Naive thymus-derived CD4-positive, alpha-beta T cell (primary cell): ENCODE measurements at regions of chr12 and their contacts with region 1.

Region 1: GRCh38 chr12:64759035-64759901 is at the start of gene GNS:
- DNase-seq: peak; percentile 81 to 99 (median 86)
- ATAC-seq: peak; percentile 96
- H3K4me3 ChIP-seq: peak within 1 kb of the TSS; percentile 98
- H3K4me3 Mint-ChIP-seq: peak within 1 kb of the TSS; percentile 86 to 99 (median 96)
- H3K27ac ChIP-seq: peak within 1 kb of the TSS; percentile 77
- H3K27ac Mint-ChIP-seq: peak within 1 kb of the TSS; percentile 78 to 96 (median 91)
- H3K4me1 ChIP-seq: peaks cover 0 to 21% of the 10 kb centered on the region in 2 donors
- H3K4me1 Mint-ChIP-seq: peaks cover 17 to 60% (median 48%) of the 10 kb centered on the region in 7 donors
- H3K27me3 ChIP-seq: no peaks in the 10 kb centered on the region
- H3K27me3 Mint-ChIP-seq: peaks cover 0 to 4% (median 0%) of the 10 kb centered on the region in 5 donors
- total RNA-seq, gene GNS: 24.4 to 62.8 (median 35.2) TPM

Region 2: DNA sequence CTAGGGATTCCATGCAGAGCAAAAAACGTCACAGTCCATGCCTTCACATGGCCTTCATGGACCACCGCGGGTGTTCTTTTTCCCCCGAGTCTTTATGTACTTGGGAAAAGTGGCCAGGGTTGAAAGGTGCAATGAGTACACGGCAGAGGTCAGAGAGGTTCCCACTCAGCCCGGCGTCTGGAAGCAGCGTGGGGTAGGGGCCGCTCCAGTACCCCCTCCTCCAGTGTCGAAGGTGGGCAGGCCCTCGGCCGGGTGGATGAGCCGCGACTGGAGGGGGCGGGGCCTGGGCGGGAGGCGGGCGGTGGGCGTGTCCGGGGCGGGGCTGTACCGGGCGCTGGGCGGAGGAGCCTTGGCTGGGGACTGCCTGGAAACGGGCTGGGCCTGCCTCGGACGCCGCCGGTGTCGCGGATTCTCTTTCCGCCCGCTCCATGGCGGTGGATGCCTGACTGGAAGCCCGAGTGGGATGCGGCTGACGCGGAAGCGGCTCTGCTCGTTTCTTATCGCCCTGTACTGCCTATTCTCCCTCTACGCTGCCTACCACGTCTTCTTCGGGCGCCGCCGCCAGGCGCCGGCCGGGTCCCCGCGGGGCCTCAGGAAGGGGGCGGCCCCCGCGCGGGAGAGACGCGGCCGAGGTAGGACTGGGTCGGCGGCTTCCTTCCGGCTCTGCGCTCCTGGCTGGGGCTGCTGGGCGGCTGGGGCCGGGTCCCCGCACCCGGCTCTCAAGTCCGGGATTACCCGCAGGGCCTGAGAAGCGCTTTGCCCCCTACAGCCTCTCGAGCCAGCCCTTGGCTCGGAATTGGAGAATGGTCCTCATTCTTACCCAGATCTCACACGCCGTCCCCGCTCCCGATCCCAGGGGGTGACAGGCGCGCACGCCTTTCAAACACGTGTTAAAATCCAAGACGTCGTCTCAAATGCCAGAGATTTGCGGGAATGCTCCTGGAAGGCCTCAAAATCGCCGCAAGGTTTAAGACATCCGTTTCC is 979.5 kb before region 1 on chr12 and contains the start of gene RXYLT1:
- CTCF ChIA-PET with region 1: no interaction called
- POLR2A ChIA-PET with region 1: no interaction called
- intact Hi-C with region 1: loop called in 1 of 2 experiments (anchors 2 kb)
- DNase-seq: peak; percentile 68 to 85 (median 77)
- ATAC-seq: peak; percentile 98
- H3K4me3 ChIP-seq: peak within 1 kb of the TSS; percentile 72
- H3K4me3 Mint-ChIP-seq: peak within 1 kb of the TSS; percentile 91 to 99 (median 96)
- H3K27ac ChIP-seq: peak within 1 kb of the TSS; percentile 88
- H3K27ac Mint-ChIP-seq: peak within 1 kb of the TSS; percentile 89 to 98 (median 94)
- H3K4me1 ChIP-seq: peaks cover 3 to 13% of the 10 kb centered on the region in 2 donors
- H3K4me1 Mint-ChIP-seq: peaks cover 6 to 48% (median 25%) of the 10 kb centered on the region in 7 donors
- H3K27me3 ChIP-seq: no peaks in the 10 kb centered on the region
- H3K27me3 Mint-ChIP-seq: peaks cover 0 to 3% (median 0%) of the 10 kb centered on the region in 5 donors
- total RNA-seq, gene RXYLT1: 9.9 to 22.0 (median 15.4) TPM

Region 3: GRCh38 chr12:64403707-64404469 is 355.4 kb before region 1 on chr12 and contains the start of gene XPOT:
- CTCF ChIA-PET with region 1: no interaction called
- POLR2A ChIA-PET with region 1: no interaction called
- intact Hi-C with region 1: loop called in 1 of 2 experiments (anchors 1 kb)
- DNase-seq: peak; percentile 85 to 94 (median 92)
- ATAC-seq: peak; percentile 97
- H3K4me3 ChIP-seq: peak within 1 kb of the TSS; percentile 81
- H3K4me3 Mint-ChIP-seq: peak within 1 kb of the TSS; percentile 90 to 99 (median 96)
- H3K27ac ChIP-seq: peak within 1 kb of the TSS; percentile 82
- H3K27ac Mint-ChIP-seq: peak within 1 kb of the TSS; percentile 84 to 98 (median 95)
- H3K4me1 ChIP-seq: peaks cover 0 to 8% of the 10 kb centered on the region in 2 donors
- H3K4me1 Mint-ChIP-seq: peaks cover 8 to 41% (median 25%) of the 10 kb centered on the region in 7 donors
- H3K27me3 ChIP-seq: no peaks in the 10 kb centered on the region
- H3K27me3 Mint-ChIP-seq: no peaks in the 10 kb centered on the region
- total RNA-seq, gene XPOT: 46.6 to 118 (median 75.1) TPM

Region 4: DNA sequence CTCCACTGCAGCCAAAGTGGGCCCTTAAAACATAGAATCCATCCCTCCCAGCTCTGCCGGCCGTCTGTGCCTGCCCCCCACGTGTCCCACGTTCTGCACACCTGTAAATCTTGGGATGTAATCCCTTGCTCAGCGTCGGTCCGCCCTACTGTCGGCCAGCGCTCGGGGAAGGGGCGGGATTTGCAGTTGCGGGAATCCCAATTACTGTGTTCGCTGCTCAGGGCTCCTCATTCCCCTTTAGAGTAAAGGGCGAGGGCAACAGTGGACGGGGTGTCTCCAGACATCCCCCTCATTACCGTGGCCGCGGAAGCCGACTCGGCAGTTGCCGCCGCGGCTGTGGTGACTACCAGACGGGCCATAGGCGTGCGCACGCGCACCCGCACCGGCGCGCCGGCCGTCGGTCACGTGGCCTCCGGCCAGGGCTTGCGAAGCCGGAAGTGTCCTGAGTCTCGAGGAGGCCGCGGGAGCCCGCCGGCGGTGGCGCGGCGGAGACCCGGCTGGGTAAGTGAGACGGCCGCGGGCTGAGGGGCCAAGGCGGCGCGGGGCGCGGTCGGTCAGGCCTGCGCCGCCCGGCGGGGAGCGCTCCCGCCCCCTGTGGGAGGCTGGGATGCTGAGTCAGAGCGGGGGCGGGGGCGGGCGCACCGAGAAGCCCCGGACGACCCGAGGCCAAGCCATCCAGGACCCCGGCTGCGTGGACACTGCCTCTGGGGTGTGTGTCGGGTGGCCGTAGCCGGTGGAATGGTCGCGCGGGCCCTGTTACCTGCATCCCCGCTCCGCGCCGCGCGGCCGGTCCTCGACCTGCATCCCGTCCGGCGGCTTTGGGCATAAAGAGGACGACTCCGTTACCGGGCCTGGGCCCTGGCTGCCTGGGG is 307.3 kb before region 1 on chr12 and contains the start of gene TBK1:
- CTCF ChIA-PET with region 1: no interaction called
- POLR2A ChIA-PET with region 1: no interaction called
- intact Hi-C with region 1: loop called (anchors 2 kb)
- DNase-seq: peak in 8 of 9 donors; percentile 21 to 80 (median 34)
- ATAC-seq: peak; percentile 78
- H3K4me3 ChIP-seq: peak within 1 kb of the TSS; percentile 61
- H3K4me3 Mint-ChIP-seq: peak within 1 kb of the TSS; percentile 90 to 99 (median 94)
- H3K27ac ChIP-seq: peak within 1 kb of the TSS; percentile 74
- H3K27ac Mint-ChIP-seq: peak within 1 kb of the TSS; percentile 86 to 95 (median 94)
- H3K4me1 ChIP-seq: peaks cover 19 to 24% of the 10 kb centered on the region in 2 donors
- H3K4me1 Mint-ChIP-seq: peaks cover 20 to 54% (median 41%) of the 10 kb centered on the region in 7 donors
- H3K27me3 ChIP-seq: no peaks in the 10 kb centered on the region
- H3K27me3 Mint-ChIP-seq: no peaks in the 10 kb centered on the region
- total RNA-seq, gene TBK1: 9.0 to 34.0 (median 12.1) TPM

Region 5: DNA sequence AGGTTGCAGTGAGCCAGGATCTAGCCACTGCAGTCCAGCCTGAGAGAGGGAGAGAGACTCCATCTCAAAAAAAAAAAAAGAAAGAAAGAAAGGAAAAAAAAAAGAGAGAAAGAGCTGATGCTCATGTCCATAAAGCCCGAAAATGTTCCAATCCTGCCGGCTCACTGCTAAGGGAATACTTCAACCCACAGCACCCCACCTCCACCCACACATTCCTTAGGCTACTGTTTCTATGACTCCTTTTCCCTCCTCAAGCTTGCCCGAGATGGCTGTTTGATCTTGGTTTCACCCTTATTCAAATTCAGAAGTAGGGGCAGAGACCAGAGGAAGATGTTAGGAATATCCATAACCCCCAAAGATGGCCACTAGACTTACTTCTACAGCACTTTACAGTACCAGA is 208.5 kb before region 1 on chr12:
- CTCF ChIA-PET with region 1: no interaction called
- POLR2A ChIA-PET with region 1: no interaction called
- intact Hi-C with region 1: loop called in 1 of 2 experiments (anchors 1 kb)
- DNase-seq: no peak
- ATAC-seq: no peak
- H3K4me3 ChIP-seq: no peak overlapping the region
- H3K4me3 Mint-ChIP-seq: no peak overlapping the region
- H3K27ac ChIP-seq: no peak overlapping the region
- H3K27ac Mint-ChIP-seq: peak overlapping the region in 3 of 9 donors; percentile 7 to 83 (median 18)
- H3K4me1 ChIP-seq: peaks cover 0 to 4% of the 10 kb centered on the region in 2 donors
- H3K4me1 Mint-ChIP-seq: peaks cover 2 to 11% (median 9%) of the 10 kb centered on the region in 7 donors
- H3K27me3 ChIP-seq: no peaks in the 10 kb centered on the region
- H3K27me3 Mint-ChIP-seq: peaks cover 0 to 20% (median 0%) of the 10 kb centered on the region in 5 donors

Region 6: DNA sequence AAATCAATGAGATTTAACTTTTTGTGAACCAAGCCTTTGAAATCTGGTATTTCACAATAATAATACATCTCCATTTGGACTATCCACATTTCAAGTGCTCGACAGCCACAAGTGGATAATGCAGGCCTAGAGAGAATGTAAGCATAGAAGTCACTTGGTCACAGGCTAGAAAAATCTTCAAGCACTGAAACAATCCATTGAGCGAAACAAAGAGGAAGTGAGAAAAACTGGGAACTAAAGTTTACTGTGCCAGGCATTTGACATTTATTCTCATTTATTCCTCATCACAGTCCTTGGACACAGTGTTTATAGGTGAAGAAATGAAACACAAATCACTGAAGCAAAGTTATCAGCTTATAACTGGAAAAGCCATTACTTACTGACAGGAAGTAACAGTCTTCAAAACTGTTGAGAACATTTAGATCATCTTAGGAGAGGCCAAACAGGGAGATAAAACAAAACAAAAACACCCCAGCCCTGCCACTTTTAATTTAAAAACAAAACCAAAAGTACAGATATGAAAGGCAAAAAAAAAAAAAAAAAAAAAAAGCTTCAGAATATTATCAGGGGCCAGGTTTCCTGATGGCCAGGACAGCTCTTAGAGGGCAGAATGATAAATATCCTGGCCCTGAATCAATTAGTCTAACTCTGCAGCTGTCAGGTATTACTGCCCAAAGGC is 29.2 kb before region 1 on chr12:
- CTCF ChIA-PET with region 1: no interaction called
- POLR2A ChIA-PET with region 1: no interaction called
- intact Hi-C with region 1: loop called in 1 of 2 experiments (anchors 1 kb)
- DNase-seq: peak in 1 of 9 donors; percentile 4
- ATAC-seq: peak; percentile 42
- H3K4me3 ChIP-seq: no peak overlapping the region
- H3K4me3 Mint-ChIP-seq: peak overlapping the region in 5 of 10 donors; percentile 12 to 63 (median 41)
- H3K27ac ChIP-seq: no peak overlapping the region
- H3K27ac Mint-ChIP-seq: peak overlapping the region; percentile 38 to 88 (median 71)
- H3K4me1 ChIP-seq: peaks cover 7 to 20% of the 10 kb centered on the region in 2 donors
- H3K4me1 Mint-ChIP-seq: peaks cover 11 to 24% (median 16%) of the 10 kb centered on the region in 7 donors
- H3K27me3 ChIP-seq: no peaks in the 10 kb centered on the region
- H3K27me3 Mint-ChIP-seq: no peaks in the 10 kb centered on the region

Region 7: DNA sequence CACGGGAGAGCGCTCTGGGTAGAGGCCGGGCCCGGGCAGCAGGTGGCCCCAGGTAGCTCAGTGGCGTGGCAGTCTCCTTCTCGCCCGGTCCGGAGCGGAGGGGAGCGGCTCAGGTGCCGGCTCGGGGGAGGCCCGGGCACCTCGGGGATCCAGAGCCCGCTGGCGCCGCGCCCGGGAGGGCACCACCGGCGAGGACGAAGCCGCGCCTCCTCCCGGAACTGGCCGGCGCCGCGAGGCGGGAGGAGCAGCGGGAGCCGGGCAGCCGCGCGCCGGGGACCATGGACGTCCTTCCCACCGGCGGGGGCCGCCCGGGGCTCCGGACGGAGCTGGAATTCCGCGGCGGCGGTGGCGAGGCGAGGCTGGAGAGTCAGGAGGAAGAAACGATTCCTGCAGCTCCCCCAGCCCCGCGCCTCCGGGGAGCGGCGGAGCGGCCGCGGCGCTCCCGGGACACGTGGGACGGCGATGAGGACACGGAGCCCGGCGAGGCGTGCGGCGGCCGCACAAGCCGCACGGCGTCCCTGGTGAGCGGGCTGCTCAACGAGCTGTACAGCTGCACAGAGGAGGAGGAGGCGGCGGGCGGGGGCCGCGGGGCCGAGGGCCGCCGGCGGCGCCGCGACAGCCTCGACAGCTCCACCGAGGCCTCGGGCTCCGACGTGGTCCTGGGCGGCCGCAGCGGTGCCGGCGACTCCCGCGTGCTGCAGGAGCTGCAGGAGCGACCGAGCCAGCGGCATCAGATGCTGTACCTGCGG is 21.4 kb after region 1 on chr12:
- CTCF ChIA-PET with region 1: no interaction called
- POLR2A ChIA-PET with region 1: no interaction called
- intact Hi-C with region 1: loop called in 1 of 2 experiments (anchors 1 kb)
- DNase-seq: peak in 2 of 9 donors; percentile 20 to 37
- ATAC-seq: peak; percentile 69
- H3K4me3 ChIP-seq: peak overlapping the region; percentile 25
- H3K4me3 Mint-ChIP-seq: peak overlapping the region; percentile 63 to 90 (median 82)
- H3K27ac ChIP-seq: no peak overlapping the region
- H3K27ac Mint-ChIP-seq: no peak overlapping the region
- H3K4me1 ChIP-seq: peaks cover 6 to 14% of the 10 kb centered on the region in 2 donors
- H3K4me1 Mint-ChIP-seq: peaks cover 15 to 21% (median 18%) of the 10 kb centered on the region in 7 donors
- H3K27me3 ChIP-seq: peaks cover 24 to 31% of the 10 kb centered on the region in 2 donors
- H3K27me3 Mint-ChIP-seq: peaks cover 76 to 87% (median 82%) of the 10 kb centered on the region in 5 donors

Region 8: GRCh38 chr12:65269603-65270002 is 510.3 kb after region 1 on chr12:
- CTCF ChIA-PET with region 1: no interaction called
- POLR2A ChIA-PET with region 1: no interaction called
- intact Hi-C with region 1: no loop called
- DNase-seq: no peak
- ATAC-seq: no peak
- H3K4me3 ChIP-seq: no peak overlapping the region
- H3K4me3 Mint-ChIP-seq: no peak overlapping the region
- H3K27ac ChIP-seq: no peak overlapping the region
- H3K27ac Mint-ChIP-seq: no peak overlapping the region
- H3K4me1 ChIP-seq: no peaks in the 10 kb centered on the region
- H3K4me1 Mint-ChIP-seq: no peaks in the 10 kb centered on the region
- H3K27me3 ChIP-seq: no peaks in the 10 kb centered on the region
- H3K27me3 Mint-ChIP-seq: peaks cover 26 to 36% (median 33%) of the 10 kb centered on the region in 5 donors